Gastrocnemius medialis (tissue), 4 donors: ENCODE measurements at regions of chr6 and their contacts with region 1.

Region 1: GRCh38 chr6:160992061-160992979 is 751 bp downstream of the MAP3K4 start:
- DNase-seq: peak; percentile 22 to 23
- ATAC-seq: peak; percentile 49 to 50
- H3K4me3 ChIP-seq: peak overlapping the region; percentile 69 to 94 (median 93)
- H3K27ac ChIP-seq: peak overlapping the region; percentile 80 to 88 (median 88)
- H3K4me1 ChIP-seq: peaks cover 18 to 43% of the 10 kb centered on the region in 2 donors
- H3K27me3 ChIP-seq: no peaks in the 10 kb centered on the region
- CTCF ChIP-seq: peak in 2 of 5 experiments; percentile 17 to 59
- POLR2A ChIP-seq: no peak

Region 2: GRCh38 chr6:160634706-160635105 is 357.6 kb before region 1 on chr6:
- in situ Hi-C with region 1: no loop called
- intact Hi-C with region 1: no loop called
- DNase-seq: no peak
- ATAC-seq: no peak
- H3K4me3 ChIP-seq: no peak overlapping the region
- H3K27ac ChIP-seq: no peak overlapping the region
- H3K4me1 ChIP-seq: no peaks in the 10 kb centered on the region
- H3K27me3 ChIP-seq: no peaks in the 10 kb centered on the region
- CTCF ChIP-seq: no peak
- POLR2A ChIP-seq: no peak

Region 3: DNA sequence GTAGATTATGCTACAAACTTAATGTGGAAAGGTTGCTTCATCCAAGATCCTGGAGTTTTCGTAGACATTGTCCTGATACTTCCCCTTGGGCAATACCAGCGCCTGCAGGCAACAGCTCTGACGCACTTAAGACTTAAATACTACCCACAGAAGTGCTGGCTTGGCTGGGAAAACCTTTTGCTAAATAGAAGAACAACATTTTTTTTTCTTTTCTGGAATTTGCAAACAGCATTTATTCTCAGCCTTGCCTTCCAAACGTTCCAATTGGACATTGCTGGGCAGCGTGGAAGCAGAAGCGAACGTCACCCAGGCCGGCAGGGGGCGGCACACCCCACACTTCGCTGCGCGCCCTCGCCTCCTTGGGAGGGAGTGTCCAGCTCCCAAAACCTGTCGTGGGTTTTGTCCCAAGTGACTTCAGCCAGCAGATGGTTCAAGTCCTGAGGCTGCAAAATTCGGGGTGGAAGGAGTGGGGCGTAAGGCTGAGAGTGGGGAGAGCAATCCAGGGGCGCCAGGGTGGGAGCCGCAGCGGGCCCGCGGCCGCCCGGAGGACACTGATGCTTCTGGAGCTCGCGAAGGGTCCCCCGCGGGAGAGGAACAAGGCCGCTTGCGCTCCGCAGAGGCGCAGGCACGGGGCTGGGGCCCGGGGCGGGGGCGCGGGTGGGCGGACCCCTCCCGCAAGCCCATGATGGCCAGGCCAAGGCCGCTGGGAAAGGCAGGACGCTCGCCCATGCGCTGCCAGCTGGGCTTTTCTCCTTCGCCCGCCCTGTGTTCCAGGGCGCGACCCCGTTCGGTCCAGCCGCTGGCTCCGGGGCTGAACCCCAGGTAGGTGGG is 61.6 kb before region 1 on chr6:
- in situ Hi-C with region 1: no loop called
- intact Hi-C with region 1: loop called (anchors 2 kb)
- DNase-seq: peak; percentile 26 to 28
- ATAC-seq: peak; percentile 77 to 82
- H3K4me3 ChIP-seq: peak overlapping the region; percentile 43 to 64 (median 49)
- H3K27ac ChIP-seq: no peak overlapping the region
- H3K4me1 ChIP-seq: peaks cover 0 to 6% of the 10 kb centered on the region in 2 donors
- H3K27me3 ChIP-seq: peaks cover 0 to 19% (median 4%) of the 10 kb centered on the region in 3 donors
- CTCF ChIP-seq: peak; percentile 70 to 91 (median 83)
- POLR2A ChIP-seq: no peak

Region 4: GRCh38 chr6:161011492-161012480 is 19.5 kb after region 1 on chr6:
- in situ Hi-C with region 1: no loop called
- intact Hi-C with region 1: no loop called
- DNase-seq: no peak
- ATAC-seq: peak in 1 of 2 donors; percentile 26
- H3K4me3 ChIP-seq: no peak overlapping the region
- H3K27ac ChIP-seq: peak overlapping the region in 2 of 4 donors; percentile 3 to 9
- H3K4me1 ChIP-seq: peaks cover 26 to 36% of the 10 kb centered on the region in 2 donors
- H3K27me3 ChIP-seq: no peaks in the 10 kb centered on the region
- CTCF ChIP-seq: no peak
- POLR2A ChIP-seq: no peak

Region 5: DNA sequence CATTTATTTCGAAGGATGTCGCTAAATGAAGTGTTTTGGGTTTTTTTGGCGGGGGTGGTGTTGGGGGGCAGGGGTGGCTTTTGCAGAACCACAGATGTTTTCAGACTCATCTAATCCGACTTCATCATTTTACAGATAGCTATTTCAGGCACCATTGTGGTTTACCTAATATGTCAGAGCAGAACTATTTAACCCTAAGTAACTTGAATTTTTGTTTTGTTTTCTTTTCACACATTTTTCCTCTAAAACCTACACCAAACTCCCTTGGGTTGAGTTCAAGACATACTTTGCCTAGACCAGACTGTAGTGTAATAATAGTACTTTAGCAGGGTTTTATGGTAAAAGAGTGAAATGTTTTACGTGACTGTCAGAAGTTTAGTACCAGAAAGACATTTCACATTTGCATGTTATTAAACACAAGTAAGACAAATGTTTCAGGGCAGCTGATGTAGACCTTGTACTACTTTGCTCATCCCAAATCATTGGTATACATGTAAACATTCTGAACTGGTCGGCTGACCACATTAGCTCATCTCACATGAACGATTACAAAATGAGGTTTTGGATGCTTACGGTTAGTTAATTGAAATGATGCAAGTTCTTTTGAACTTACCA is 37.0 kb after region 1 on chr6:
- in situ Hi-C with region 1: no loop called
- intact Hi-C with region 1: loop called (anchors 2 kb)
- DNase-seq: no peak
- ATAC-seq: no peak
- H3K4me3 ChIP-seq: no peak overlapping the region
- H3K27ac ChIP-seq: no peak overlapping the region
- H3K4me1 ChIP-seq: peaks cover 18 to 19% of the 10 kb centered on the region in 2 donors
- H3K27me3 ChIP-seq: no peaks in the 10 kb centered on the region
- CTCF ChIP-seq: no peak
- POLR2A ChIP-seq: no peak